Activated B cell treated with CpG ODN at 0.5 μM for 24 hours (primary cell): ENCODE measurements at regions of chr12 and their contacts with region 1.

Region 1: GRCh38 chr12:56315622-56316473 is at the start of gene CNPY2:
- DNase-seq: peak; percentile 85
- ATAC-seq: peak; percentile 89
- H3K4me3 Mint-ChIP-seq: peak within 1 kb of the TSS; percentile 98
- H3K27ac Mint-ChIP-seq: peak within 1 kb of the TSS; percentile 98
- H3K4me1 Mint-ChIP-seq: peaks cover 21% of the 10 kb centered on the region
- H3K27me3 Mint-ChIP-seq: no peaks in the 10 kb centered on the region
- CTCF ChIP-seq: no peak
- total RNA-seq, gene CNPY2: 72.1 and 98.8 TPM in 2 replicates

Region 2: DNA sequence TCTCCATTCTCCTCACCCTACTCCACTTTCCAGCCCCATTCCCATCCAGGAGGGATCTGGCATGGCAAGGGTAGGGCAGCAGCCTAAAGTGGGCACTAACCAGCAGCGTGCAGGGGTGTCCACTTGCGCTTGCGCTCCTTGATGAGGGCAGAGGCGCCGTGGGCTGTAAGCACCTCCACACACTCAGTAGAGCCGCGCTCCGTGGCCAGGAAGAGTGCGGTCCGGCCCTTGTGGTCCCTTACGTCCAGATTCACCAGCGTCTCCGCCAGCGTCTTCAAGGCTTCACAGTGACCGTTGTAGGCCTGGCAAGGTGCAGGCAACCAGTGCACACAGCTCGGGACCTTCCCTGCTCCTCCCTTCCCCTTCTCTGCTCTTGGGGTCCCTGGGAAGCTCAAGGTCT is 67.9 kb before region 1 on chr12:
- CTCF ChIA-PET with region 1: no interaction called
- POLR2A ChIA-PET with region 1: no interaction called
- intact Hi-C with region 1: no loop called
- DNase-seq: no peak
- ATAC-seq: no peak
- H3K4me3 Mint-ChIP-seq: no peak overlapping the region
- H3K27ac Mint-ChIP-seq: no peak overlapping the region
- H3K4me1 Mint-ChIP-seq: no peaks in the 10 kb centered on the region
- H3K27me3 Mint-ChIP-seq: no peaks in the 10 kb centered on the region
- CTCF ChIP-seq: no peak

Region 3: GRCh38 chr12:56258057-56258819 is 57.6 kb before region 1 on chr12 and contains the start of gene ANKRD52:
- CTCF ChIA-PET with region 1: interaction called, 3 read pairs
- POLR2A ChIA-PET with region 1: interaction called, 10 read pairs
- intact Hi-C with region 1: no loop called
- DNase-seq: peak; percentile 89
- ATAC-seq: peak; percentile 94
- H3K4me3 Mint-ChIP-seq: peak within 1 kb of the TSS; percentile 91
- H3K27ac Mint-ChIP-seq: peak within 1 kb of the TSS; percentile 77
- H3K4me1 Mint-ChIP-seq: peaks cover 21% of the 10 kb centered on the region
- H3K27me3 Mint-ChIP-seq: no peaks in the 10 kb centered on the region
- CTCF ChIP-seq: peak; percentile 28
- total RNA-seq, gene ANKRD52: 44.1 and 44.8 TPM in 2 replicates

Region 4: DNA sequence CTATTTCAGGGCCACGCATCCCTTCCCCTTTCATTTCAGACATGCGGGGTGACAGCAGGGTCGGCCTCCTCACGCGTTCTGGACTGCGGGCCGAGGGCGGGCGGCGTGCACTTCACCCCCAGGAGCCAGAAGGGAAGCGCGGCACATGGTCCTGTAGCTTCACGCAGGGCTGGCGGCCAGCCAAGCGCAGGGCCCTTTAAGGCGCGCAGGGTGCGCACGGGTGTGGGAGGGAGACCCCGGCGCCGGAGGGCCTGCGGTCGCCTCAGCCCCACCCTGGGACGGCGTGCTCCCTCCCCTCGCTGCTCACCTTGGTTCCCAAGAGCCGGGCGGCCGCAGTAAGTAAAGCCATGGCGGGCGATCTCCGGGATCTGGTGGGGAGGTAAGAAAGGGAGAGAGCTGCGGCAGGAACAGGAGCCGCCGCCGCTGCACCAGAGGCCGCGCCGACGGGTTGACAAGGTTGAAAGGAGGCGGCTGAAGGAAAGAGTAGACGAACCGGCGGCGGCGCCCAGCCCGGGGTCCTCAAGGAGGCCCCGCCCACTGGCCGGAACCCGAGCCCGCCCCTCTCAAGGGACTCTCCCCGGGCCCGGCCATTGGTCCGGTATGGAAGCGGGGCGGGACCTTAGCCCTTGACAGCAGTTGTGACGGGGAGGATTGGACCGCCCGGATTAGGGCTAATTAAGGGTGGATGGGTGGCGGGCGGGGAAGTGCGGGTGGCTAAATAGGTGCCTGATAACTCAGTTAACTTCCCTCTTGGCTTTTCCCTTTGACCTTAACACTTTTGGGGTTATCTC is 15.8 kb before region 1 on chr12 and contains the start of gene CS:
- CTCF ChIA-PET with region 1: interaction called, 3 read pairs
- POLR2A ChIA-PET with region 1: interaction called, 3 read pairs
- intact Hi-C with region 1: loop called (anchors 1 kb)
- DNase-seq: peak; percentile 97
- ATAC-seq: peak; percentile 96
- H3K4me3 Mint-ChIP-seq: peak within 1 kb of the TSS; percentile 96
- H3K27ac Mint-ChIP-seq: peak within 1 kb of the TSS; percentile 97
- H3K4me1 Mint-ChIP-seq: peaks cover 59% of the 10 kb centered on the region
- H3K27me3 Mint-ChIP-seq: no peaks in the 10 kb centered on the region
- CTCF ChIP-seq: no peak
- total RNA-seq, gene CS: 229 and 233 TPM in 2 replicates

Region 5: GRCh38 chr12:56377310-56377988 is 61.6 kb after region 1 on chr12:
- CTCF ChIA-PET with region 1: no interaction called
- POLR2A ChIA-PET with region 1: interaction called, 11 read pairs
- intact Hi-C with region 1: loop called (anchors 1 kb)
- DNase-seq: no peak
- ATAC-seq: no peak
- H3K4me3 Mint-ChIP-seq: no peak overlapping the region
- H3K27ac Mint-ChIP-seq: peak overlapping the region; percentile 94
- H3K4me1 Mint-ChIP-seq: peaks cover 53% of the 10 kb centered on the region
- H3K27me3 Mint-ChIP-seq: no peaks in the 10 kb centered on the region
- CTCF ChIP-seq: no peak

Region 6: GRCh38 chr12:56461235-56462159 is 145.6 kb after region 1 on chr12:
- CTCF ChIA-PET with region 1: interaction called, 51 read pairs
- POLR2A ChIA-PET with region 1: interaction called, 27 read pairs
- intact Hi-C with region 1: loop called (anchors 1 kb)
- DNase-seq: no peak
- ATAC-seq: no peak
- H3K4me3 Mint-ChIP-seq: no peak overlapping the region
- H3K27ac Mint-ChIP-seq: peak overlapping the region; percentile 14
- H3K4me1 Mint-ChIP-seq: peaks cover 22% of the 10 kb centered on the region
- H3K27me3 Mint-ChIP-seq: no peaks in the 10 kb centered on the region
- CTCF ChIP-seq: no peak

Region 7: DNA sequence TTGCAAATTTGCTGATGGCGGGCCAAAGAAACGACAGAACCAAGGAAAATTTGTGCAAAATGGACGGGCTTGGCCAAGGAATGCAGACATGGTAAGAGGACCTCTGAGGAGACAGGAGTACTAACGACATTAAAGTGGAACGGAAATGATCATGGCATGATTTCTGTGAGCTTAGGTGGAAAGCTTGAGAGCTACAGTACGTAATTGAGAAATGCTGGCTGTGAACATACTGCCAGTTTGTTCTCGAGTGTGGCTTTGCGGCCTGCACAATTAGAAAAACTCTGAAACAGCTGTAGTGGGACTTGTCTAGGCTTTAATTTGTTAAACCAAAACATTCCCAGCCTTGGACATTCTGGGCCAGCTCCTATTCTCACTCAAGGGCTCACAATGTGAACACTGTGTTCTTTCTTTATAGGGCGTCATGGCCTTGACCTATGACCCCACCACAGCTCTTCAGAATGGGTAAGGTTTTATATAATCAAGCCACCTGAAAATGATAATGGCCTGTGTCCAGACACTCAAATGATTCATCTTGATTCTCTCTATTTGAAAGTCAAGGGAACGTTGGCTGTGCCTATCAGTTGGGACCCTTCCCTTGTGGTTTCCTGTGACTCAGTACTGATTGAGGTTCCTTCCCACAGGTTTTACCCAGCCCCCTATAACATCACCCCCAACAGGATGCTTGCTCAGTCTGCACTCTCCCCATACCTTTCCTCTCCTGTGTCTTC is 265.7 kb after region 1 on chr12:
- CTCF ChIA-PET with region 1: no interaction called
- POLR2A ChIA-PET with region 1: no interaction called
- intact Hi-C with region 1: no loop called
- DNase-seq: no peak
- ATAC-seq: no peak
- H3K4me3 Mint-ChIP-seq: no peak overlapping the region
- H3K27ac Mint-ChIP-seq: no peak overlapping the region
- H3K4me1 Mint-ChIP-seq: peaks cover 2% of the 10 kb centered on the region
- H3K27me3 Mint-ChIP-seq: no peaks in the 10 kb centered on the region
- CTCF ChIP-seq: no peak